ENCODE measurements at regions of chr19 and their contacts with region 1.

Region 1: DNA sequence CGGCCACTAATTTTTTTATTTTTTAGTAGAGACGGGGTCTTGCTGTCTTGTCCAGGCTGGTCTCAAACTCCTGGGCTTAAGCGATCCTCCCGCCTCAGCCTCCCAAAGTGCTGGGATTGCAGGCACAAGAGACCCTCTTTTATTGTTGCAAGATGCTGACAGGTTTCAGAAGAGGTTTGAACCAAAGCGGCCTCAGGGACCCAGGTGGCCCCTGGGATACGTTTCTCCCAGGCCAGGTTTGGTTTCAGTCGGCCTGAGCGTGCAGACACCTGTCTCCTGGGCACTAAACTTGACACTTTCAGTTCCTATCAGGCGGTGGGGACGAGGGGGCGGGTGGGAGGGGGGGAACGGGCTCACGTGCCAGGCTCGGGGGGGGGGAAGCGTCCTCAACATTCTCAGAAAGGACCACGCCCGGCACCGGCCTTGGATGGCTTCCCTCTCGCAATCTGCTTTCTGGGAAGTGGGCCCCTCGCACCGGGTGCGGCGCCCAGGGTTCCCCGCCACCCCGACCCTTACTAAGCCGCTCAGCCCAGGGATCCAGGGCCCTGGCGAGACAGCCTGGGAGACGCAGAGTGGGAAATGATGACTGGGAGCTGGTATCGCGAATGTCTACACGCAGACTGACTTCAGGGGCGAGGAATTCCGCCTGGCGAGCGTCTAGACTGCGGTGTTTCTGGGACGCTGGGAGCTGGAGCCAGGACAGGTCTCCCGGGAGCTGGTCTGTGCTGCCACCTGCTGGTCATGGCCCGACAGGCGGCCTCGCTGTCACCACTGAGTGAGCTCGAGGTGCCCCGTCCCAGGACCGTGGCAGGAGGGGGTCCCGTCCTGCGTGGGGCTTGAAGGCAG is 91.6 kb downstream of the GNG7 start:
- DNase-seq: peak; percentile 92
- H3K4me3 Mint-ChIP-seq: peak overlapping the region; percentile 78
- H3K27ac Mint-ChIP-seq: no peak overlapping the region
- H3K4me1 Mint-ChIP-seq: peaks cover 41% of the 10 kb centered on the region
- H3K27me3 Mint-ChIP-seq: peaks cover 17% of the 10 kb centered on the region

Region 2: DNA sequence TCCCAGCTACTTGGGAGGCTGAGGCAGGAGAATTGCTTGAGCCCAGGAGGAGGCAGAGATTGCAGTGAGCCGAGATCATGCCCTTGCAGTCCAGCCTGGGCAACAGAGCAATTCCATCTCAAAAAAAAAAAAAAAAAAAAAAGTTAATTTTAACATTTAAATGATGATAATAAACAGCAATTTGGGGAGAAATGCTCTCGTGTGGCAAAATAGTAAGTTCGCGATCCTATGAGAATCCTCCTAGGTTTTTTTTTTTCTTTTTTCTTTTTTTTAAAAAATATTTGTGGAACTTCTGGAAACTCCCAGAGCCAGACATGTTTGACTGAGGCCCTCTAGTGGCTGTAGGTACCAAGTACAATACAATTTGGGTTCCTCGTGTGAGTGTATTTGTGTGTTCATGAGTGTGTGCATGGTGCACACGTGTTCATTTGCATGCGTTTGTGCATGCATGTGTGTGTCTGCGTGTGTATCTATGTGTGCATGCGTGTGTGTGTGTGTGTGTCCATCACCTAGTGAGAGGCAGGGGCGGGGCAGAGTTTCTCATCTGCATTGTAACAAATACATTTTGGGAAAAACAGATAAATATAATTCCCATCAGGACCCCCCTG is 219.6 kb before region 1 on chr19:
- CTCF ChIA-PET with region 1: interaction called, 7 read pairs
- POLR2A ChIA-PET with region 1: no interaction called
- intact Hi-C with region 1: loop called (anchors 2 kb)
- DNase-seq: peak; percentile 45
- H3K4me3 Mint-ChIP-seq: no peak overlapping the region
- H3K27ac Mint-ChIP-seq: no peak overlapping the region
- H3K4me1 Mint-ChIP-seq: peaks cover 10% of the 10 kb centered on the region
- H3K27me3 Mint-ChIP-seq: no peaks in the 10 kb centered on the region

Region 3: GRCh38 chr19:2455851-2456570 is 154.8 kb before region 1 on chr19:
- CTCF ChIA-PET with region 1: interaction called, 13 read pairs
- POLR2A ChIA-PET with region 1: no interaction called
- intact Hi-C with region 1: no loop called
- DNase-seq: peak; percentile 62
- H3K4me3 Mint-ChIP-seq: peak overlapping the region; percentile 83
- H3K27ac Mint-ChIP-seq: peak overlapping the region; percentile 82
- H3K4me1 Mint-ChIP-seq: peaks cover 18% of the 10 kb centered on the region
- H3K27me3 Mint-ChIP-seq: no peaks in the 10 kb centered on the region

Region 4: DNA sequence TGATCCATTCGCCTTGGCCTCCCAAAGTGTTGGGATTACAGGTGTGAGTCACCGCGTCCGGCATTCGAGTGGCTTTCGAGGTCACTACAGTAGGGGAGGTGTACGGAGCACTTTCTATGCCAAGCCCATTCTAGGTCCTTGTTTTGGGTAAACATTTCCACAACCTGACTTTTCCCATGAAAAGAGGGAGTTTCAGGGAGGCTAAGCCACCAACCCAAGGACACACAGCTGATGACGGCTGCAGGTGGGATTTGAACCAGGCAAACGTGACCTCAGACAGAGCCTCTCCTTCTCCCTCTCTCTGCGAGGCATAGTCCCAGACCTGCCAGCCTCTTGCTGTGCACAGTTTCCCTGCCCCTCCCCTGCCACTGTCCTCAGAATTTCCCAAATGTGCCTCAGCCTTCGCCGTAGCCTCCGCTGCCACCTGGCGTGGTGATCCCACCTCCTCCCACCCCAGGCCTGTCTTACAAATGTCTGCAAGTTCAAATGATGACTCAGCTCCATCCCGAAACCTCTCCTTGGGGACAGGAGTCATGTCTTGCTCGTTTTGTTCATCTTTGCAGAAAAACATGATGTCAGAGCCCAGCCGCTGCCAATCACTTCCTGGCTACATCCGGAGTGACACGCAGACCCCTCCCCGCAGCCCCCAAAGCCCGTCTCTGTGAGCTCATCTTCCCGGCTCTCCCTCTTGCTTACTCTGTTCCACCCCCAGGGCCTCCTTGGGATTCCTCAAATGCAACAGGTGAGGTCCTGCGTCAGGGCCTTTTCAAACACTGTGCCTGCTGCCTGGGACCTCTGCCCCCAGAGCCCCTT is 141.6 kb before region 1 on chr19:
- CTCF ChIA-PET with region 1: interaction called, 64 read pairs
- POLR2A ChIA-PET with region 1: interaction called, 5 read pairs
- intact Hi-C with region 1: no loop called
- DNase-seq: peak; percentile 76
- H3K4me3 Mint-ChIP-seq: peak overlapping the region; percentile 26
- H3K27ac Mint-ChIP-seq: peak overlapping the region; percentile 57
- H3K4me1 Mint-ChIP-seq: peaks cover 11% of the 10 kb centered on the region
- H3K27me3 Mint-ChIP-seq: peaks cover 1% of the 10 kb centered on the region

Region 5: DNA sequence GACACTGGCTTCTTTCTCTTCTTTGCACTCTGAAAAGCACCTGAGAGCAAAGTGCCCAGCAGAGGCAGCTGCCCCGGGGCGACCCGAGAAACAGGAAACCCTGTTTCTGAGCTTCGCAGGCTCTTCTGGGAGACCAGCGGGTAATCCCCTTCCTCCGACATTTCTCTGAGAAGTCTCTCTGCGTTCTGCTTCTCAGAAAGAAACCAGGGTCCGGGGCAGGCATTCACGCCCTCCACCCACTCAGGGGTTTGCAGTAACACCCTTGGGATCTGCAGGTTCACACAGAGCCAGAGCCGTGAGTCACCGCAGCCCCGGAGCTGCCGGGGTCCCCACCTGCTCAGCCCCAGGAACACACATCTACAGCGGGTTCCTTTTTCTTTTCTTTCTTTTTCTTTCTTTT is 49.0 kb before region 1 on chr19:
- CTCF ChIA-PET with region 1: interaction called, 9 read pairs
- POLR2A ChIA-PET with region 1: no interaction called
- intact Hi-C with region 1: loop called (anchors 5 kb)
- DNase-seq: peak; percentile 86
- H3K4me3 Mint-ChIP-seq: peak overlapping the region; percentile 71
- H3K27ac Mint-ChIP-seq: peak overlapping the region; percentile 76
- H3K4me1 Mint-ChIP-seq: peaks cover 25% of the 10 kb centered on the region
- H3K27me3 Mint-ChIP-seq: peaks cover 2% of the 10 kb centered on the region

Region 6: DNA sequence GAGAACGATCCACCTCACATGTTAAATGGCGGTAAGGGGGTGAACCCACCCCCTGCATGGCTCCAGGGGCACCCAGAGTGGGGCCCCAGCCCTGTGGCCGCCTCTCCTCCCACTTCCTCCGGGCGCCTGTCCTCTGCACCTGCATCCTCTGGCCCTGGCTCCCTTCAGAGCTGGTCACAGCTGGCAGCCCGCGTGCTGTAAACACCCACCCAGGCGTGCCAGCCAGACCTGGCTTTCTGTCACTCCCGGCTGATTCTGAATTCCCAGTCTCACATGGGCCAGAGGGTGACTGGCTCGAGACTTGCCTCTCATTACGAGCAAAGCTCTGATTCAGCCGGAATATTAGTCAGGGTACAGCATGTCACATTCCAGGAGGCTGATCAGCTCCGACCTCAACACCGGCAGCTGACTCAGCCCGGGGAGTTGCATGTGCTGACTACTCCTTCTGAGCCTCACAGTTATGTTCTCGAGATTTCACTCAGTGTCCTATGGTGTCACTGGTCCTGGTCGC is 16.5 kb after region 1 on chr19:
- CTCF ChIA-PET with region 1: interaction called, 11 read pairs
- POLR2A ChIA-PET with region 1: no interaction called
- intact Hi-C with region 1: loop called (anchors 2 kb)
- DNase-seq: peak; percentile 80
- H3K4me3 Mint-ChIP-seq: no peak overlapping the region
- H3K27ac Mint-ChIP-seq: peak overlapping the region; percentile 75
- H3K4me1 Mint-ChIP-seq: peaks cover 30% of the 10 kb centered on the region
- H3K27me3 Mint-ChIP-seq: no peaks in the 10 kb centered on the region

Region 7: DNA sequence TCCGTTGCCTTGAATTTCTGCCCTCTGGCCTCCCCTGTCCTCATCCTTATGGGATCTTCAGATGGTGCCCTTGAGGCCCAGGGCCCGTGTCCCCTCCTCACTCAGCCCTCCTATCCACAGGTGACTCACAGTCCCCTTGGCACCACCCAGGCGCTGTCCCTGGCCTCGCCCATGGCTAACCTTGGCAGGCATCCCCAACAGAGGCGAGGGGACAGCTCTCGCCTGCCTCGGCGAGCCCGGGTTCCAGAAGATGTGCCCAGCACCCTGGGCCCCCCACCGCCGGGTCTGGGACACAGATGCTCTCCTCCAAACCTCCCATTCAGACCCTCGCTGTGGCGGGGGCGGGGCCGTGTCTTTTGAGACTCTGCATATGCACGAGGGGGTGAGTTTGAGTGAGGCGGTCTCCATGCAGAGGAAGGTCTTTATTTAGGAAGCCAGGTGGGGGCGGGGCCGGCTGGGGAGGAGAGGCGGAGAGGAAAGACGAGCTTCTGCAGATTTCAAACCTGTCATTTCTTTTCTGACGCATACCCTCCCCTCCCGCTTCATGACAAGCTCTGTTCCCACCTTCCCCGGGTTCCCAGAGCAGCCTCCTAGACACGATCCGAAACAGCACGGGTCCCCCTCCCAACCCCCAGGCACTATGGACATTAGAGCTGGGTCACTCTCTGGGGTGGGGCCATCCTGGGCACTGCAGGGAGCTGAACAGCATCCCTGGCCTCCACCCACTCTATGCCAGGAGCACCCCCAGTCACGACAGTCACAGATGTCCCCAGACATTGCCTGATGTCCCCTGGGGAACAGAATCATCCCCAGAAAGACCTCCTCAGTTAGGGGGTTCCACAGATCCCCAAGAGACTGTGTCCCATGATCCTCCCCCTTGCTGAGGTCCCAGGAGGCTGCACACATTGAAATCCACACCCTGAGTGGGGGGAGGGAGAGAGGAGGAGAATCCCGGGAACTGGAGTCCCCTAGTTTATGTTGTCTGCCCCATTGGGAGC is 43.1 kb after region 1 on chr19:
- CTCF ChIA-PET with region 1: no interaction called
- POLR2A ChIA-PET with region 1: no interaction called
- intact Hi-C with region 1: no loop called
- DNase-seq: no peak
- H3K4me3 Mint-ChIP-seq: no peak overlapping the region
- H3K27ac Mint-ChIP-seq: no peak overlapping the region
- H3K4me1 Mint-ChIP-seq: no peaks in the 10 kb centered on the region
- H3K27me3 Mint-ChIP-seq: no peaks in the 10 kb centered on the region

Region 8: GRCh38 chr19:2668175-2668763 is 57.4 kb after region 1 on chr19:
- CTCF ChIA-PET with region 1: no interaction called
- POLR2A ChIA-PET with region 1: no interaction called
- intact Hi-C with region 1: no loop called
- DNase-seq: no peak
- H3K4me3 Mint-ChIP-seq: no peak overlapping the region
- H3K27ac Mint-ChIP-seq: no peak overlapping the region
- H3K4me1 Mint-ChIP-seq: no peaks in the 10 kb centered on the region
- H3K27me3 Mint-ChIP-seq: no peaks in the 10 kb centered on the region

Measured in activated CD4-positive, alpha-beta memory T cell treated with anti-CD3 and anti-CD28 coated beads for 36 hours (primary cell).